Posterior cingulate gyrus (tissue), 11 donors: ENCODE measurements at regions of chr1 and their contacts with region 1.

Region 1: GRCh38 chr1:40404670-40405462 is 31.3 kb downstream of the SMAP2 start:
- DNase-seq: peak in 3 of 10 donors; percentile 30 to 57 (median 50)

Region 2: GRCh38 chr1:40153073-40153770 is 251.6 kb before region 1 on chr1:
- intact Hi-C with region 1: loop called (anchors 2 kb)
- DNase-seq: no peak

Region 3: DNA sequence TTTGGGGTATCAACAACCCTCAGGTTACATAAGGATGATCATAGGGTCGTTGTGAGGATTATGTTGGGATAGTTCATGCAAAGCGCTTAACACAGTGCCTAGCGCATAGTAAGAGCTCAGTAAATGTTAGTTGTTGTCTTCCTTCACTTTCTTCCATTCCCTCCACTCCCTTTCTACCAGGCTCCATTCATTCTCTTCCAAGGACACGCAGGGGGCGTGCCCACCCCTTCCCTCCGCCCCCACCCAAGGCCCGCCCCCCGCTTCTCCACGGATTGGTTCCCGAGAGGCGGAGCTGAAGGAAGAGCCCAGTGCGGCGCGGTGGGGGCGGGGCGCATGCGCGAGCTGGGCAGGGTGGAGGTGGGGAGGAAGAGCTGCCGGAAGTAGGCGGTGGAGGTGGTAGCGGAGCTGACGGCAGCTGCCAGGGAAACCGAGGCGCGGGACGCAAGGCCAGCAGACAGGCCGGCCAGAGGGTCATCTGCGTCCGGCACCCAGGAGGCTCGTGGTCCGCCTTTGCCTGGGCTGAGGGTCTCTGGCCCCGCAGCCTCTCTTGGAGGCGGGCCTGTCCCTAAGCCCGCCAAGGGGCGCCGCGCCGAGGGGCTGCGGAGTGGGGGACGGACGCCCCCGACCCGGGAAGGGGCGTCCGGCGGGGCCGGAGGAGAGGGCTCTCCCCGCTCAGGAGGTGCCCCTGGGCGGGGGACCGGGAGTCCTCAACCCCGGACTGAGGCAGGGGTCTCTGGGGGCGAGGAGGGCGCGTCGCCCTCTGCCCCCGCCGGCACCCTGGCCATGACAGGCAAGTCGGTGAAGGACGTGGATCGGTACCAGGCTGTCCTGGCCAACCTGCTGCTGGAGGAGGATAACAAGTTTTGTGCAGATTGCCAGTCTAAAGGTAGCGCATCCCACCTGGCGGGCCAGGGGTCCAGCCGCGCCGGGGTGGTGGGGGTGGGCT is 31.3 kb before region 1 on chr1 and contains the start of gene SMAP2:
- intact Hi-C with region 1: loop called (anchors 5 kb)
- DNase-seq: peak; percentile 90 to 99 (median 94)

Region 4: DNA sequence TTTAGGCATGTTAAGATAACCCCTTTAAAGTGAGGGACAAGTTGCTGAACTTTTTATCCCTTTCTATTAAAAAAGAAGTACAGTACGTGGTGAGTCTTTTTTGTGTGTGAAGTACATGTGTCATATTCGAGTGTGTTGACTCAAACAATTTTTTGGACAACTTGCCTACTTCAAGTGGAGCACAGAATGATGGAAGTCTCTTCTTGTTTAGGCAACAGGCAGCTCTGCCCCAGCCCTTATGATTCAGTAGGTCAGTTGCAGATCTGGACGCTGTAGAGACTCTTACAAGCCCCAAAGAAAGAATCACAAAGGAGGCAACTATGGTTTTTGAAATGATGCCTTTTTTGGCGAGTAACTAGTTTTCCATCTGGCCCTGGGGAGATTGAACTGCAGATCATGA is 31.0 kb after region 1 on chr1:
- intact Hi-C with region 1: loop called (anchors 2 kb)
- DNase-seq: no peak

Region 5: GRCh38 chr1:41003640-41004220 is 598.9 kb after region 1 on chr1:
- intact Hi-C with region 1: no loop called
- DNase-seq: peak; percentile 76 to 98 (median 91)